Activated CD4-positive, alpha-beta memory T cell treated with anti-CD3 and anti-CD28 coated beads for 36 hours (primary cell): ENCODE measurements at regions of chr5 and their contacts with region 1.

Region 1: GRCh38 chr5:7886849-7887475 is 18.0 kb downstream of the MTRR start:
- DNase-seq: no peak
- H3K4me3 Mint-ChIP-seq: no peak overlapping the region
- H3K27ac Mint-ChIP-seq: no peak overlapping the region
- H3K4me1 Mint-ChIP-seq: peaks cover 4% of the 10 kb centered on the region
- H3K27me3 Mint-ChIP-seq: no peaks in the 10 kb centered on the region

Region 2: DNA sequence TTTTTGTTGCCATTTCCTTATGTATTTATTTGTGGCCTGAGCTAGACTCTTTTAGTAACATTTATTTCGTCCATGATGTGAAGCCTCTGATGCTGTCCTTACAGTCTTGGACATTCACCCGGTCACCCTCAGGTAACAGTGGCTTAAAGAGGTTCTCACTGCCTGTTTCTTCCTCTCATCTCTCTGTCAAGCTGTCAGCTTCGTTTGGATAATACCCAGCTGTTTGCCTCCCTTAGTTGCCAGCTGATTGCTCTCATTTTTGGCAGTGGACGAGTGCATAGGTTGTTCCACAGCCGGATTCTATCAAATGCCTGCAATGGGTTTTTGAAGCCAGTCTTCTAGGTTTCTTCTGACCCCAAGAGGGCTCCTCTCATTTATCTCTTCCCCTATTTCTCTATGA is 1936.3 kb before region 1 on chr5:
- CTCF ChIA-PET with region 1: no interaction called
- POLR2A ChIA-PET with region 1: no interaction called
- intact Hi-C with region 1: no loop called
- DNase-seq: no peak
- H3K4me3 Mint-ChIP-seq: no peak overlapping the region
- H3K27ac Mint-ChIP-seq: no peak overlapping the region
- H3K4me1 Mint-ChIP-seq: no peaks in the 10 kb centered on the region
- H3K27me3 Mint-ChIP-seq: peaks cover 12% of the 10 kb centered on the region

Region 3: DNA sequence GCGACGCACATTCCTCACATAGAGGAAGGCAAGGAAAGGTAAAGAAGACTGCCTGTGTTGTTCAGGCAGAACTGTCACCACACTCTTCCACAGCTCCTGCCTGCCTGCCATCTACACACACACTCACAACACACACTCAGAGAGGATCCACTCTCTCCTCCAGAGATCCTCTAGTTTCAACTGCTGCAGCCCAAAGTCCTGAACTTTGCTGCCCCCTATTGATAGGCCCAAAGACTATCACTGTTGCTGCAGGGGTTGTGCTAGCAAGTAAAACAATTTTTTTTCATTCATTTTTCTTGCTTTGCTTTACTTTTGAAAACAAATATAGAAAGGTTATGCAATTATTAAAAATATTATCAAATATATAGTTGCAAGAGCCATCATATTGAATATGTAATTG is 30.1 kb before region 1 on chr5:
- CTCF ChIA-PET with region 1: interaction called, 12 read pairs
- POLR2A ChIA-PET with region 1: no interaction called
- intact Hi-C with region 1: no loop called
- DNase-seq: peak; percentile 52
- H3K4me3 Mint-ChIP-seq: no peak overlapping the region
- H3K27ac Mint-ChIP-seq: no peak overlapping the region
- H3K4me1 Mint-ChIP-seq: peaks cover 28% of the 10 kb centered on the region
- H3K27me3 Mint-ChIP-seq: no peaks in the 10 kb centered on the region

Region 4: DNA sequence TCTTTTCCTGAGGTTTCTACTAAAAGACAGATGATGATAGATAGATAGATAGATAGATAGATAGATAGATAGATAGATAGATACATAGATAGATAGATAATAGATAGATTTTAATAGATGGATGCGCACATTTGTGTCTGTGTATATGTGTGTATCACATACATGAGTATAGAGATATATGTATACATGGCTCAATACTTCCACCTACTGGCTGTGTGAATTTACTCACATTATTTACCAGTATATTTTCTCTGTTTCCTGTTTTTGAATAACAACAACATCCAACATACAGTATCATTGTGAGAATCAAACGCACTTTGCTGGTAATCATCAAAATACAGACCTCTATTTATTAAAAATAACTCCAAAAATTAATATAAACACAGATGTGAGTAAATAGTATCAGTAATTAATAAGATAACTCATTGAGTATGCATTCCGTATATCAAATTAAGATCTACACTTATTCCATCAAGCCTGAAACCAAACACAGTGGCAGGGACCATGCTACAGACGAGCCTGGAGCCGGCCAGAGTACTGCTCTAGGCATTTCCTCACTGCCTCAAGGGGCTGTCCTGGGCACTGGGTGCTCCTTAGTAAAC is 1321.0 kb after region 1 on chr5:
- CTCF ChIA-PET with region 1: interaction called, 4 read pairs
- POLR2A ChIA-PET with region 1: no interaction called
- intact Hi-C with region 1: loop called (anchors 5 kb)
- DNase-seq: no peak
- H3K4me3 Mint-ChIP-seq: no peak overlapping the region
- H3K27ac Mint-ChIP-seq: no peak overlapping the region
- H3K4me1 Mint-ChIP-seq: no peaks in the 10 kb centered on the region
- H3K27me3 Mint-ChIP-seq: no peaks in the 10 kb centered on the region